ENCODE measurements at regions of chr20 and their contacts with region 1.

Region 1: GRCh38 chr20:59611269-59611668 is 6.9 kb downstream of the PHACTR3 start:
- DNase-seq: peak; percentile 22 to 52
- ATAC-seq: peak in 4 of 8 donors; percentile 48 to 82 (median 65)
- H3K4me3 ChIP-seq: no peak overlapping the region
- H3K27ac ChIP-seq: no peak overlapping the region
- H3K4me1 ChIP-seq: peaks cover 0 to 6% (median 0%) of the 10 kb centered on the region in 9 donors
- H3K27me3 ChIP-seq: peaks cover 0 to 45% (median 36%) of the 10 kb centered on the region in 7 donors
- CTCF ChIP-seq: no peak

Region 2: DNA sequence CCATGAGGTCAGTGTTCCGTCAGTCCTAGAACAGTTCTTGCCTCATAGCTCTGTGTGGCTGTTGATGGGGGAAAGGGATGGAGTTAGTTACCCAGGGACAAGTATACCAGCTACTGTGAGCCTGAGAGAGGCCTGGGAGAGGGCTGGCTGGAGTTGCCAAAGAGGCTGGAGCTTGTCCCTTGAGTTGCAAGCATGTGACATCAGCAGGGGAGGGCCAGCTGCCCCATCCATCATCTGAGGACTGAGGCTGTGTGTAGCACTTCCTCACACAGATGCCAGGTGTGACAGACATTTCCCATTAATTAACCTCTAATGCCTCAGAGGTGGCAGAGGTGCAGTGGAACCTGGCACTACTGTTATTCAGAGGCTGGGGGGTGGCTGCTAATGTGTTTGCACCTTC is 124.6 kb after region 1 on chr20:
- intact Hi-C with region 1: loop called in 1 of 10 experiments (anchors 10 kb)
- DNase-seq: no peak
- ATAC-seq: peak in 3 of 8 donors; percentile 50 to 67 (median 61)
- H3K4me3 ChIP-seq: no peak overlapping the region
- H3K27ac ChIP-seq: no peak overlapping the region
- H3K4me1 ChIP-seq: no peaks in the 10 kb centered on the region
- H3K27me3 ChIP-seq: peaks cover 0 to 67% (median 6%) of the 10 kb centered on the region in 7 donors
- CTCF ChIP-seq: no peak